ENCODE measurements at regions of chr2 and their contacts with region 1.

Region 1: DNA sequence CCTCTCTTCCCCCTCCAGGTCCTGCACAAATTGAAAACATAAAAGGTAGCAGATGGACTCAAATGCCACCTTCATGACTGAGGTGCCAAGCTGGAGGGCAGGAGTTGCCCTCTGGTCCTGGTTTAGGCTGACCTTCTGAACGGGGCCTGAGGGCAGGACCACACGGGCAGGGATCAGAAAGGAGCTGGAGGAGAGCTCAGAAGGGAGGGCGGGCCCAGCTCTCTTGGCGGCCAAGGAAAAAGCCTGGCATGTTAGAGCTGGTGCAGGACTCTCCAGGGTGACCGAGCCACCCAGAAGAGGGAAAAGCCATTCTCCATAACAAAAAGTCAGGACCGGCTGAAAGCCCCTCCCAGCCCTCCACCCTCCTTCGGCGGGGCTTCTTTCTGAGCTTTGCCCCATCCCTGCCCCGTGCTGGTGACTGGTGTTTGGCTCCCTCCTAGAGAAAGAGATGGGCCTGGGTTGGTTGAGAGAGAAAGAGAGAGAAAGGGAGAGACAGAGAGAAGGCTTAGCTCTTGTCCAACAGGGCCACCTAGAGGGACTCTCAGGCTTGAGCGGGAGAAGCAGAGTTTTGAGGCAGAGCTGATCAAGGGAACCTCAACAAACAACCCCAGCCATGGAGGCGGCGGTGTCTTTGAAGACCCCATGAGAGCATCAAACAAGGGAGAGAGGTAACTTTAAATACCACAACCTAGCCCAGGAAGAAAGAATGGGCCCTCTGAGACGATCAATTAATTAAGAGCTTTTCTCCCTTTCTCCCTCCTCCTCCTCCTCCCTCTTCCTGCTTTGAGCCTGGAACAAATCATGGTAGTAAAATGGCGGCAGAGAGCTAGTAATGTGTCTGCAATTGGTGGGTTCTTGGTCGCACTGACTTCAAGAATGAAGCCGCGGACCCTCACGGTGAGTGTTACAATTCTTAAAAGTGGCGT is 50.8 kb downstream of the WIPF1 start:
- DNase-seq: peak; percentile 84 to 88
- H3K4me3 ChIP-seq: peak overlapping the region; percentile 54
- H3K4me3 Mint-ChIP-seq: peak overlapping the region; percentile 96
- H3K27ac Mint-ChIP-seq: peak overlapping the region; percentile 98
- H3K4me1 ChIP-seq: peaks cover 22% of the 10 kb centered on the region
- H3K4me1 Mint-ChIP-seq: peaks cover 7% of the 10 kb centered on the region
- H3K27me3 ChIP-seq: no peaks in the 10 kb centered on the region
- H3K27me3 Mint-ChIP-seq: no peaks in the 10 kb centered on the region
- CTCF ChIP-seq: peak; percentile 70 to 85

Region 2: GRCh38 chr2:174158003-174158402 is 388.8 kb before region 1 on chr2:
- CTCF ChIA-PET with region 1: no interaction called
- POLR2A ChIA-PET with region 1: no interaction called
- intact Hi-C with region 1: loop called (anchors 10 kb)
- DNase-seq: peak; percentile 69 to 75
- H3K4me3 ChIP-seq: no peak overlapping the region
- H3K4me3 Mint-ChIP-seq: no peak overlapping the region
- H3K27ac Mint-ChIP-seq: no peak overlapping the region
- H3K4me1 ChIP-seq: no peaks in the 10 kb centered on the region
- H3K4me1 Mint-ChIP-seq: peaks cover 20% of the 10 kb centered on the region
- H3K27me3 ChIP-seq: no peaks in the 10 kb centered on the region
- H3K27me3 Mint-ChIP-seq: no peaks in the 10 kb centered on the region
- CTCF ChIP-seq: peak; percentile 56 to 80

Region 3: GRCh38 chr2:174487108-174487819 is 59.6 kb before region 1 on chr2:
- CTCF ChIA-PET with region 1: interaction called, 16 read pairs
- POLR2A ChIA-PET with region 1: interaction called, 7 read pairs
- intact Hi-C with region 1: loop called (anchors 1 kb)
- DNase-seq: peak; percentile 97 to 100
- H3K4me3 ChIP-seq: peak overlapping the region; percentile 94
- H3K4me3 Mint-ChIP-seq: peak overlapping the region; percentile 84
- H3K27ac Mint-ChIP-seq: peak overlapping the region; percentile 74
- H3K4me1 ChIP-seq: peaks cover 14% of the 10 kb centered on the region
- H3K4me1 Mint-ChIP-seq: peaks cover 4% of the 10 kb centered on the region
- H3K27me3 ChIP-seq: no peaks in the 10 kb centered on the region
- H3K27me3 Mint-ChIP-seq: peaks cover 12% of the 10 kb centered on the region
- CTCF ChIP-seq: no peak

Region 4: DNA sequence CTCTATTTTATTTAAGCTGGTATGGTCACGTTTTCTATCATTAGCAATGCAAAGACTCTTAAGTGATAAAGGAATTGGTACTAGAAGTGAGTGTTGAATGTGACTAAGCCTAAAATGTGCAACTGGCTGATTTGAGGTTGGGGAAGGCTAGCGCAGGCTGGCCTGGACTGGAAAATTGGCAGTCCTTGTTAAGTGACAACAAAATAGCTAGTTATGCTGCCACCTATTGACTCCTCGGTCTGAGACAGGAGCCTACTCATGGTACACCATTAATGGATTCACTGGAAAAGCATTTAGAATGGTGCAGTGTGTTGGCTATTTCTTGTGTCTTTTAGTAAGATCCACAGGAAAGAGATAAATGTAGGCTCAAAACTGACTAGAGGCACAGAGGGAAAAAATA is 56.4 kb after region 1 on chr2:
- CTCF ChIA-PET with region 1: interaction called, 7 read pairs
- POLR2A ChIA-PET with region 1: no interaction called
- intact Hi-C with region 1: loop called (anchors 1 kb)
- DNase-seq: peak; percentile 43 to 49
- H3K4me3 ChIP-seq: no peak overlapping the region
- H3K4me3 Mint-ChIP-seq: no peak overlapping the region
- H3K27ac Mint-ChIP-seq: no peak overlapping the region
- H3K4me1 ChIP-seq: no peaks in the 10 kb centered on the region
- H3K4me1 Mint-ChIP-seq: no peaks in the 10 kb centered on the region
- H3K27me3 ChIP-seq: no peaks in the 10 kb centered on the region
- H3K27me3 Mint-ChIP-seq: no peaks in the 10 kb centered on the region
- CTCF ChIP-seq: peak; percentile 53 to 59

Region 5: DNA sequence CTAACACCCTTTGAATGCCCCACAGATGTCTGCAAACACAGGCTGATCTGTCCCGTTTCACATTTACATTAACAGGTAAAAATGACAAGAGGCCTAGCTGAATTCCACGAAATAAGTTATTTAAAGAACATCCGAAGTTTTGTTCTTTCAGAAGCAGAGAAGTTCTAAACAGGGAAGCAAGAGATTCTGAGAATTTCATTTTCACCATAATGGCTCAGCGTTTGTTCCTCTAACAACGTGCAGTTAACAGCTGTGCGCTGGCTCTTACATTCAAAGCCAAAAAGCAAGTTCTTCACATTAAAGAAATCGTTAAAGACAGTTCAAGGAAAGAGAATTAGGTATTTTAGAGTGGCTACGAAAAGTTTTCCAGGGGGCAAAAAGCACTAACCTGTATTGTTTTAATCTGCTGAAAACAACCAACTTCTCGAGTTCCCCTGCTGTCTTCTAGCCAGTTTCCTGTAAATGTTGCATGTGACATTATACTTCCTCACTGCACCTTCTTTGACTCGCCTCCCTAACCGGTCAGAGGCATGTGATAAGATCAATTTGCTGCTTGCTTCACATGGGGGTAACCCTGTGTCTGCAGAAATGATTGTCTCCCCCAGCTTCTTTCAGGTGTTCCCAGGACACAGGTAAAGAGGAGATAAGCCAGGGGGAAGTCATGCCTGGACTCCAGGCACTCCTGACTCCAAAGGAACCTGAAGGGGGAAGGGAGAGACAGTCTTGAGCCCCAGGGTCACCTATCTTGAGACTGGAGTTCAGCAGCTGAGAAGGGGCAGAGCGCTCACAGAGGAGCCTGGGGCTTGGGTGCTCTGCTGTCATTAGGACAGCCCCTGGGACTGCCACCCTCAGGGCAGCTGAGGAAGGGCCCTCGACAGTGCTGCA is 87.5 kb after region 1 on chr2:
- CTCF ChIA-PET with region 1: no interaction called
- POLR2A ChIA-PET with region 1: no interaction called
- intact Hi-C with region 1: no loop called
- DNase-seq: no peak
- H3K4me3 ChIP-seq: no peak overlapping the region
- H3K4me3 Mint-ChIP-seq: no peak overlapping the region
- H3K27ac Mint-ChIP-seq: no peak overlapping the region
- H3K4me1 ChIP-seq: no peaks in the 10 kb centered on the region
- H3K4me1 Mint-ChIP-seq: no peaks in the 10 kb centered on the region
- H3K27me3 ChIP-seq: no peaks in the 10 kb centered on the region
- H3K27me3 Mint-ChIP-seq: no peaks in the 10 kb centered on the region
- CTCF ChIP-seq: no peak

Measured in Caco-2 (cell line).